ENCODE measurements at regions of chr6 and their contacts with region 1.

Region 1: DNA sequence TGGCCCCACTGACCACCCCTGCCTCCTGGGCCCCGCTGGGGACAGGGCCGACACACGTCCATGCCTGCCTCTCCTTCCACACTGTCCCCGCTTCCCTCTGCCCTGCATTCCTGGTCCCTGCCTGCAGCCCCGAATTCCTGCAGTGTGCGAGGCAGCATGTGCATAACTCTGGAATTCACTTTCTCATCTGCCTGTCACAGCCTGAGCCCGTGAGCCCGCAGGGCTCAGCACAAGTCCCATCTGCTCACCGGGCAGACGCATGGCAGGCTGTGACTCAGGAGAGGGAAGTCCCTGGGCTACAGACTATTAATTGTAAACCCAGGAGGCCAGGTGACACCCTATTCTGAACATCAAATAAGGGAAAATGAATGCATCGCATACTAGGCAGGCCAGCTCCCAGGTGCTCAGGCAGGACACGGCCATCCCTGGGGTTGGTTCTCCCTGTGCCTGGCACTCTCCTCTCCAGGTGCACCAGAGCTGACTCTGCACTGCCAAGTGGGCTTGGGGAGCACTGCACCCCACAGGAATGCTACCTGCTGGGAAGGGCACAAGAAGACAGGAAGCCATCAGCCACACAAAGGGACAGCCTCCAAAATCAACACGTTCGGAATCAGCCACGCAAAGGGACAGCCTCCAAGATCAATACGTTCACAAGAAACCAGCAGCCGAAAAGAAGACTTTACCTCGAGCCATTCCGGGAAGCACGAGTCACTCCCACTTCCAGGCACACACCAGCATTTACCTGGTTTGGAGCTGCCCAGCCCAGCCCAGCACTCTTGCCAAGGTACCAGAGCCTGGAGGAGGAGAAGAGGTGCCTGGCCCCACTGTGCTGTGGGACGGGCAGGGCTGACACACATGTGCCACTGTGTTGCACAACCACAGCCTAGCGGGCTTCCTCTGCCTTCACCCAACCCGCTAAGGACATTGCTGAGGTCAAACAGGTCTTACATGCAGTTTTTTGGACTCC is 65.9 kb downstream of the DLL1 start:
- DNase-seq: no peak
- ATAC-seq: peak in 3 of 8 donors; percentile 11 to 21 (median 20)
- H3K4me3 ChIP-seq: no peak overlapping the region
- H3K27ac ChIP-seq: peak overlapping the region in 2 of 10 donors; percentile 15 to 40
- H3K4me1 ChIP-seq: peaks cover 0 to 16% (median 10%) of the 10 kb centered on the region in 9 donors
- H3K27me3 ChIP-seq: peaks cover 0 to 6% (median 0%) of the 10 kb centered on the region in 7 donors
- CTCF ChIP-seq: no peak

Region 2: GRCh38 chr6:170178561-170179477 is 46.2 kb before region 1 on chr6:
- intact Hi-C with region 1: loop called in 1 of 10 experiments (anchors 5 kb)
- DNase-seq: no peak
- ATAC-seq: peak in 4 of 8 donors; percentile 29 to 59 (median 51)
- H3K4me3 ChIP-seq: no peak overlapping the region
- H3K27ac ChIP-seq: peak overlapping the region in 2 of 10 donors; percentile 14 to 27
- H3K4me1 ChIP-seq: peaks cover 0 to 20% (median 7%) of the 10 kb centered on the region in 9 donors
- H3K27me3 ChIP-seq: no peaks in the 10 kb centered on the region
- CTCF ChIP-seq: no peak